Mucosa of descending colon (tissue), 3 donors: ENCODE measurements at regions of chr6 and their contacts with region 1.

Region 1: DNA sequence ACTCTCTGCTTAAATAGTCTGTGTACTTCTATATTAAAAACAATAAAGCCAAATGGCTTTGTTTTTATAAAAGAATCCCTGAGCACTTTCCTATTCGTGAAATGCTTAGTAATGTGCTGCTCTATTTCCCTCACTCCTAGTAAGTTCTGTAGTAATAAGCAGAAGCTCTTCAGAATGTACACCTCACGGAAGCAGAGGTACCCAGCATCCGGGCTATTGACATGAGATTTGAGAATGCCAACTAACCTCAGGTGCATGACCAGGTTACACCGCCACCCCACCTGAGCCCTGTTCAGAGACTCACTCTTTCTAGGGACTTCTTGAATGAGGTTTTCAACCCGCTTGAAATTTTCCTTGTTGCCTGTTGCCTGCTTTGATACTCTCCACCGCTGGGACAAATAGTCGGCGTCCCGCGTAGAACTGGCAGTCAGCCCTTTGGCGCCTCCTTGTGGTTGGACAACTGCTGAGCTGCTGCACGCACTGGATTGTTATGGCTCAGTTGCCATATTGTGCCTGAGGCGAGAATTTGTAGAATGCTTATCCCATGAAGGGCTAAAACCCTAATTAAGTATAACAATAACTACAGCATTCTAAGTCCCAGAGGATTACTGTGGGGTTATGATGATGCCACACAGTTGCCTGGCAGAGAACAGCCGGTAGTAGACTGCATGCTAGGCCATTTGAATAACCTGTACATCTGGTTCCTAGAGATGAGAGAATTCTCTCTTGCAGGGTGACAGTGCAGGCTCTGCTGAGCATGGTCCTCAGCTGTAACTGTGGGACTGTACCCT is 95.4 kb downstream of the KHDC1L start:
- DNase-seq: peak; percentile 61 to 86 (median 77)
- ATAC-seq: peak; percentile 89
- H3K4me3 ChIP-seq: no peak overlapping the region
- H3K4me1 ChIP-seq: no peaks in the 10 kb centered on the region
- CTCF ChIP-seq: peak; percentile 66

Region 2: DNA sequence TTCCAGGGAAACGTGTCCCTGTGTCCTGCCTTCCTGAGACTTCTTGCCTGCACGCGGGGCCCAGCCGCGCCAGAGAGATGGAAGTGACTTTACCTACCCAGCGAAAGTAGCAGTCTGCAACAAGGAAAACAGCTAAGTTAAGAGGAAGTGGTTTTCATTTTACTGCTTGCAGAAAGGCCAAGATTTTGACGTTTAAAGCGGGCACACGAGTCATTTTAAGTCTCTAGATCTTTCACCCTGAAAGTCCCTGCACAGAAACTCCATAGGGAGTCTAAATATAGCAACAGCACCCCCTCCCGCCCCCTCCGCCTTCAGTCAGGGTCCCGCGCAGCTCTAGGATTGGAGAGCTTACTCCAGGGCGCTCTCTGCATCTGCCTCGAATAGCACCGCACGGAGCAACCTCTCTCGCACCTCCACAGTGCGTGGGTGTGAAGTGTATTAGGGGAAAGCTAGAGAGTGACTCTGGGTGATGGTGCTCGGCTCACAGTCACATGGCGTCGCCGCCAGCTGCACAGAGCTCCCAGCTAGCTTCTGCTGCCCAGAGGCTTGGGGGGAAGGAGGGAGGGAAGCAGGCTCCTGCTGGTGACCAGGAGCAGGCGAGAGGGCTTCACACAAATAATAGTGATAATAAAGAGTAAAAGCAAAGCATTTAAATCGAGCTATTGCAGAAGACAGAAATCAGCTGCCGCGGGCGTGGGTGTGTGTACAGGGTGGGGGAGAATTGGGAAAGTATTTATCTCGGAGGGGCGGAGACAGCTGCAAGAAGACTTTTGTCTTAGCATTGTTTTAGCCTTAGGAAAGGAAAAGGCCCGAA is 509.8 kb before region 1 on chr6:
- intact Hi-C with region 1: loop called in 1 of 2 experiments (anchors 10 kb)
- DNase-seq: peak; percentile 30 to 66 (median 41)
- ATAC-seq: peak; percentile 65
- H3K4me3 ChIP-seq: no peak overlapping the region
- H3K4me1 ChIP-seq: peaks cover 14% of the 10 kb centered on the region
- CTCF ChIP-seq: no peak